A673 (cell line): ENCODE measurements at regions of chr5 and their contacts with region 1.

Region 1: DNA sequence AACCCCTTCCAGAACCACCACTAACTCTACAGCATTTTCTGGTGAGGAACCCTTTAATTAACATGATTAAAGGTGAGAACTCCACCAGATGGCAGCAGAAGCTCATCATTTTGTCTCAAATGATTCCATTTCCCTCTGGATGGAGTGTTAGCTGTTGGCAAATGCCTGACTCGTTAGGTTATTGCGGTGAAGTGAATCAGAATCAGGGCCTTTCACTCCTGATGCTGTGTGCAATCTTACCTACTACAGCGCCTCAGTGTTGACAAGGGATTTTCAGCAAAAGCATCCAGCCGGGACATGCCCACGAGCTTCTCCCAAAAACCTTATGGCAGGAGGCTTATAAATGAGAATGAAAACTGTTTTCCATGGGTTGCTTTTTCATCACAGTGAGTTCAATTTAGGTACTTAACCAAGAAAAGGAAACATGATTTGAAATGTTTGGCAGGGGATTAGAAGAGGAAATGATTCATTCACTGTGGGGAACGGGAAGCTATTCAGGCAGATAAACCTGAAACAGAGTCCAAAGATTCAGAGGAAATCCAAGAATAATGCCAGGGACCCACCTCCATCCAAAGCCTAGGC is 48.0 kb upstream of the CAST start:
- DNase-seq: peak; percentile 92
- H3K4me3 ChIP-seq: peak overlapping the region; percentile 13
- H3K27ac ChIP-seq: peak overlapping the region; percentile 55
- H3K4me1 ChIP-seq: peaks cover 36% of the 10 kb centered on the region
- H3K27me3 ChIP-seq: no peaks in the 10 kb centered on the region
- CTCF ChIP-seq: peak; percentile 65

Region 2: DNA sequence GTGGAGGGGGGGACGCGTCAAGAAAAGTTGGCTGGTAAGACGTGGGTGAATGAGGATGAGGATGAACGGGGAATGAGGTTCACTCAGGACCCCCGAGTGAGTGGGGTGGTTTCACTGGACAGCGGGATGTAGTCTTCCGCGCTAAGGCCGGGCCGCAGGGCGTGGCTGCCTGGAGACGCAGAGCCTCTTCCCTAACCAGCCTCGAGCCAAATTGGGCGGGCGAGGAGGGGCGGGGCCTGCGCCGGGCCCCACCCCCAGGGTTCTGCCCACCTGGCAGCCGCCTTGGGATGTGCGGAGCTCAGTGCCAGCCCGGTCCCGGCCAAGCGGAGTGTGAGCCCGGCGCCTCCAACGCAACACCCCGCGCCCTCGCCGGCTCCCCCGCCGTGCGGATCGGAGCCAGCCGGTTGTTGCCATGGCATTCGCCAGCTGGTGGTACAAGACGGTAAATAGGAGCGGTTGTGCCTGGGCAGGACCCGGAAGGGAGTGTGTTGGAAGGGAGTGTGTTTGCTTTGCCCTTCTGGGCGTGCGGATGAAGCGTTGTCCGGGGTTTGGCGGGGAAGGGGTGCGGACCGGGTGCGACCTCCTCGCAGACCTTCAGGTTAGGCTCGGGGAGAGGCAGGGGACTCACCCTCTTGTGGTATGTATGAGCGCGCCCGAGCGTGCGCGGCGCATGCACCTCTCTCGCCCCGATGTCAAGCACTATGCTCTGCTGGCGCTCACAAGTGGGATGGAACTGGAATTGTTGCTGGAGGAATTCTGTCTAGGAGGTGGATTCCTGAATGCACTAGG is 48.7 kb after region 1 on chr5:
- CTCF ChIA-PET with region 1: no interaction called
- POLR2A ChIA-PET with region 1: no interaction called
- intact Hi-C with region 1: loop called (anchors 2 kb)
- DNase-seq: peak; percentile 88
- H3K4me3 ChIP-seq: peak overlapping the region; percentile 86
- H3K27ac ChIP-seq: peak overlapping the region; percentile 65
- H3K4me1 ChIP-seq: no peaks in the 10 kb centered on the region
- H3K27me3 ChIP-seq: no peaks in the 10 kb centered on the region
- CTCF ChIP-seq: no peak

Region 3: DNA sequence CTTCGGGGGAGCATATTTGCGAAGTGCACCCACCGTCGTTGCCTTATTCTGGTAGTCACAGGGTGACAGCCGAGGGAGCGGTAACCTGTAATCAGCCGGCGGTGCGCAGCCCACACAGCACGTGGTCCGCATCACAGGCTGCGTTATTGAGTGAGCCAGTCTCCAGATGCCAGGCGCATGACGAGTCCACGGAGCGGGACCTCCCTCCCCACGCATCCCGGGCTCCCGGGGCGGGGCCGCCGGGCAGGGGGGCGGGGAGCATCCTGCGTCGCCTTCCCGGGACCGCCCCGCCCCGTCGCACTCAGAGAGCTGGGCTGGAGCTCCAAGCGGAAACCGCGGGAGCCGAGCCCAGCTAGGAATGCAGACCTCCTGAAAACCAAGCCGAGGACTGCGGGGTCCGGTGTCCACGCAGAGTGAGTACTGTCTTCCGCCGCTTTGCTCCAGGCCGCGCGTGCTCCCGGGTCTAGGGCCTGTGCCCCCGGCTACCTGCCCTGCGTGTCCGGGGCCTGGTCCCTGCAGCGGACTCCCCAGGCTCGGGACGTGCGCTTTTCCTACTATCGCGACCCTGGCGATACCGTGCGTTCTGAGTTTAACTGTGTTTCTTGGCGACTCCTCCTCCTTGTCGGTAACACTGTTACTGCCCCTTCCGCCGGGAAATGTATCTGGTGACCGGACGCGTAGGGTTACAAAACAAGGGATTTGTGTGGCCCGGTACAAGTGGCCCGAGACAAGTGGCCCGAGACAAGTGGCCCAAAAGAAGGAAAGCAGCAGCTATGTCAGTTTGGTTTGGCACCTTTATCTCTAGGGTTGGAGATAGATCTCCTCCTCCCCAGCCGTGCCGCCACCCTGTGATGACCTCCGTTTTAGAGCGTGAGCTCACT is 88.5 kb after region 1 on chr5:
- CTCF ChIA-PET with region 1: interaction called, 3 read pairs
- POLR2A ChIA-PET with region 1: no interaction called
- intact Hi-C with region 1: loop called (anchors 5 kb)
- DNase-seq: peak; percentile 95
- H3K4me3 ChIP-seq: peak overlapping the region; percentile 74
- H3K27ac ChIP-seq: peak overlapping the region; percentile 84
- H3K4me1 ChIP-seq: peaks cover 17% of the 10 kb centered on the region
- H3K27me3 ChIP-seq: no peaks in the 10 kb centered on the region
- CTCF ChIP-seq: no peak

Region 4: GRCh38 chr5:96745844-96746531 is 131.8 kb after region 1 on chr5:
- CTCF ChIA-PET with region 1: interaction called, 3 read pairs
- POLR2A ChIA-PET with region 1: no interaction called
- intact Hi-C with region 1: loop called (anchors 5 kb)
- DNase-seq: peak; percentile 76
- H3K4me3 ChIP-seq: no peak overlapping the region
- H3K27ac ChIP-seq: peak overlapping the region; percentile 89
- H3K4me1 ChIP-seq: peaks cover 33% of the 10 kb centered on the region
- H3K27me3 ChIP-seq: no peaks in the 10 kb centered on the region
- CTCF ChIP-seq: no peak

Region 5: DNA sequence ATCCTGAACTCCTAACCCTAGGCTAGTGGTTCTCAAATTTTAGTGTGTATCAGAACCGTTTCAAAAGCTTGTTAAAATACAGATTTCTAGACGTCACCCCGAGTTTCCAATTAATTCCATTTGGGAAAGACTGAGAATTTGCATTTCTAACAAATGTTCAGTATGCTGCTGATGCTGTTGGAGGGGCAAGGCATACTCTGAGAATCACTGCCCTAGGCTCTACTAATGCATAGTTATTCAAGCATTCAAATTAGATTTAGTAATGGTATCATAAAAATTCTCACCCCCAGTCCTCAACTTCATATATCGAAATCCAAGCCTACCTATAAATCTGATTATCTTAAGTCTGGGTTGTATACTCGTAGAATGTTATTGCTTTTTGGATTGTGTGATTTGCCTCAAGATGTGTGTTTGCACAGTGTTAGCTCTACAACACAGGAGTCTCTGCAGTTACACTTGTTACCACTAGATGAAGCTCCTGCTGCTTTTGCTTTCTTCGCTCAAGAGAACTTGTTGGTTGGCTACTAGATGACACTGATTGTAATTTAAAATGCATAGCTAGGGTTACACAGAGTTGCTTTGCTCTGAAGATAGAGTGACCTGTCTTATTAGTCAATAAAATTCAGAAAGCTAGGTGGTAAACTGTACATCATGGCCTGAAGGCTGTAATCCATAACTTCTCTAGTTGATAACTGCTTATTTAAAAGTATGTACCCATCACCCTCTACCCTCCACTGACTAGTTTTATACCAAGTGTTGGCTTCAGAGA is 254.6 kb after region 1 on chr5:
- CTCF ChIA-PET with region 1: no interaction called
- POLR2A ChIA-PET with region 1: no interaction called
- intact Hi-C with region 1: loop called (anchors 5 kb)
- DNase-seq: peak; percentile 77
- H3K4me3 ChIP-seq: no peak overlapping the region
- H3K27ac ChIP-seq: no peak overlapping the region
- H3K4me1 ChIP-seq: peaks cover 3% of the 10 kb centered on the region
- H3K27me3 ChIP-seq: no peaks in the 10 kb centered on the region
- CTCF ChIP-seq: peak; percentile 94

Region 6: GRCh38 chr5:97071101-97071500 is 456.9 kb after region 1 on chr5:
- CTCF ChIA-PET with region 1: no interaction called
- POLR2A ChIA-PET with region 1: no interaction called
- intact Hi-C with region 1: no loop called
- DNase-seq: peak; percentile 64
- H3K4me3 ChIP-seq: no peak overlapping the region
- H3K27ac ChIP-seq: no peak overlapping the region
- H3K4me1 ChIP-seq: no peaks in the 10 kb centered on the region
- H3K27me3 ChIP-seq: no peaks in the 10 kb centered on the region
- CTCF ChIP-seq: no peak

Region 7: DNA sequence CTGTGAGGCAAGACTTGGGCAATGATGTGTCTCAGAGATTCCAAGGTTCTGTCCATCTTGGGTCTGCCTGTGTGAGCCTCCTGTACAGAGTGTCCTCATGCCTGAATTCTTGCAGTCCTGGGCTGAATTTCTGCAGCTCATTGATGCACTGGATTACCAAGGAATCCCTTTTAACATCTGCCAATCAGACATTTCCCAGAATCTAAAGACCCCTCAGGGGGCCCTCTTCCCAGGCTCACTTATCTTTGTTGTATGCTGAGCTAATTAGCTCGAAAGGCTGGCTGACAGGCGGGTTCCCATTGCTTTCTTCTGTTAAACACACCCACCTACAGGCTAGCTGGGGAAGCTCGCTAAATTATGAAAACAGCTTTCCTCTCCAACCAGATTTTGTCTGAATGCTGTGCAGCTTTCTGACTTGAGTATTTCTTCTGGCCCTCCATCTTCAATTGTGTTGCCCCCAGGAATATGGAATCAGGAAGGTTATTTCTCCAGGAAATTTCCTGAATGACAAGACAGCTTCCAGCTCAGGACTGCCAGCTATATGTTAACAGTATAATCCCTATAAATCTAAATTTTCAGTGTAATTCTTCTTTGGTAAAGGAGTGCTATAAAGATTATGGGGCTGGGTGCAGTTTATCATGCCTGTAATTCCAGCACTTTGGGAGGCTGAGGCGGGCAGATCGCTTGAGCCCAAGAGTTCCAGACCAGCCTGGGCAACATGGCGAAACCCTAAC is 528.5 kb after region 1 on chr5 and contains the start of gene LIX1:
- CTCF ChIA-PET with region 1: no interaction called
- POLR2A ChIA-PET with region 1: no interaction called
- intact Hi-C with region 1: loop called (anchors 5 kb)
- DNase-seq: peak; percentile 86
- H3K4me3 ChIP-seq: no peak within 1 kb of the TSS
- H3K27ac ChIP-seq: no peak within 1 kb of the TSS
- H3K4me1 ChIP-seq: no peaks in the 10 kb centered on the region
- H3K27me3 ChIP-seq: no peaks in the 10 kb centered on the region
- CTCF ChIP-seq: peak; percentile 75
- total RNA-seq, gene LIX1: not detected in 2 replicates